Mammary epithelial cell (primary cell): ENCODE measurements at regions of chr6 and their contacts with region 1.

Region 1: DNA sequence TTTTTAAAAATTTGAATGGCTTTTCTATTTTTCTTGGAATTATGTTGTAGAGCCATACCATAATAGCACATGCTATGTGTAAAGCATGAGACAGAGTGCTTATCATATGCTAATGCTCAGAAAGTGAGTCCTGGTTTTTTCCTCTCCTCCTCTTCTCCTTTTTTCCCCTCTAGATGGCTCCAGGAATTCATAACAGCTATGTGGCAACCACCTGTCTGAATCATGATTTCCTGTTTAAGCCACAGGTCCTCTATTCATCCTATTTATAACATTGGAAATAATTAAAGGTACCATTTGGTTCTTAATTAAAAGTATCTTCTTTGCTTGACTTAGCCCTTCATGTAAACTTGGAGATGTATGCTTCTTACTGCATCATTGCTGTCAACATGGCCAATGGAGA is 260.0 kb upstream of the MAP3K7 start:
- DNase-seq: peak; percentile 78
- H3K4me3 ChIP-seq: no peak overlapping the region
- H3K27ac ChIP-seq: peak overlapping the region; percentile 92
- H3K4me1 ChIP-seq: peaks cover 34% of the 10 kb centered on the region
- H3K27me3 ChIP-seq: no peaks in the 10 kb centered on the region
- CTCF ChIP-seq: peak; percentile 17 to 65

Region 2: DNA sequence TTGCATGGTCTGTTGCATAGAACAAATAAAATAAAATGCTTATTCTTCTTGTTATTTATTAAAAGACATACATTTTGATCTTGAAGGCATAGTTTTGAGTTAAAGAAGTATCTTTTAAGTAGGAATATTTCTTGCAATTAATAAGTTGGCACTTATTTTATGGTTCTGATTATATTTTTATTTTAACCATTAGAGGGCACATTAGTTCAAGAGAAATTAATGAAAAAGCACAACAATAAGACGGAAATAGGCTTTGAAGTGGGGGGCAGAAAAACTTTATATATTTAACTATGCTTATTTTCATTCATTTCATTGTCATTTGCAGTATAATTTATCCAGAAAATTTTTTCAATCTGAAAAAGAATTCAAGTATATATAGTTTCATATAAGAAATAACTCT is 215.8 kb before region 1 on chr6:
- CTCF ChIA-PET with region 1: no interaction called
- dilution Hi-C with region 1: no loop called
- in situ Hi-C with region 1: no loop called
- intact Hi-C with region 1: loop called (anchors 5 kb)
- DNase-seq: no peak
- H3K4me3 ChIP-seq: no peak overlapping the region
- H3K27ac ChIP-seq: no peak overlapping the region
- H3K4me1 ChIP-seq: no peaks in the 10 kb centered on the region
- H3K27me3 ChIP-seq: no peaks in the 10 kb centered on the region
- CTCF ChIP-seq: peak in 1 of 2 donors; percentile 26

Region 3: GRCh38 chr6:90715093-90715655 is 131.7 kb before region 1 on chr6:
- CTCF ChIA-PET with region 1: no interaction called
- dilution Hi-C with region 1: no loop called
- in situ Hi-C with region 1: no loop called
- intact Hi-C with region 1: loop called (anchors 10 kb)
- DNase-seq: peak; percentile 40
- H3K4me3 ChIP-seq: no peak overlapping the region
- H3K27ac ChIP-seq: no peak overlapping the region
- H3K4me1 ChIP-seq: peaks cover 16% of the 10 kb centered on the region
- H3K27me3 ChIP-seq: no peaks in the 10 kb centered on the region
- CTCF ChIP-seq: no peak

Region 4: GRCh38 chr6:90820436-90820835 is 26.4 kb before region 1 on chr6:
- CTCF ChIA-PET with region 1: no interaction called
- dilution Hi-C with region 1: no loop called
- in situ Hi-C with region 1: no loop called
- intact Hi-C with region 1: loop called (anchors 2 kb)
- DNase-seq: peak; percentile 49
- H3K4me3 ChIP-seq: no peak overlapping the region
- H3K27ac ChIP-seq: no peak overlapping the region
- H3K4me1 ChIP-seq: no peaks in the 10 kb centered on the region
- H3K27me3 ChIP-seq: no peaks in the 10 kb centered on the region
- CTCF ChIP-seq: no peak